ENCODE measurements at regions of chr6 and their contacts with region 1.

Region 1: DNA sequence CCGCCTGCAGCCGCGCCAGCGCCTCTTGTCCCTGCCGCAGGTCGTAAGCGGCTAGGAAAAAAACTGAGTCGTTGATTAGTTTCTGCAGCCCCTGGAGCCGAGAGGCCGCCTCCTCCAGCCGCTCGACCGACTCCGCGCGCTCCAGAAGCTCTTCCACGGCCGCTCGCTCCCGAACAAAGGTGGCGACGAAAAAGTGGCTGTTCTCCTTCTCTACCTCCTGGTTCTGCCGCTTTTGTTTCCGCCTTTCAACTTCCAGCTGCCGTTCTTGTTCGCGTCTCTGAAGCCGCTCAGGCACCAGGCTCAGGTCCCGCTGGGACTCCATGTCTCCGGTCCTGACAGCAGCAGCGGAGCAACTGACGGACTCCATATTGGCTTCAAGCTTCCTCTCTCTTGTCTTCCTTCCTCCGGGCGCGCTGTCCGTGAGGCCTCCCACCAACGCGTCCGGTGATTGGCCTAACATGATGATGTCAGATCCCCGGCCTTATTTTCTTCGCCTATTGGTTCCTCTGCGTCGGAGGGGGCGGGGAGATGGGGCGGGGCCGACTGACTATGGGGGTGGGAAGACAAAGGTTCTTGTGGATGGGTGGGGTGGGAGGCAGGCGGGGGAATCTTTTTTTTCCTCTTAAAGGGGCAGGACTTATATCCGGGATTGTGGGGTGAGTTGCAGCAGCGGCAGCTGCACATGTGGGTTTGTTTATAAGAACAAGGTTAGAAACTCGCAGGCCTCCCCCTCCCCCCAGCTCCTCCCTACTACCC is at the start of gene TBCC:
- DNase-seq: peak; percentile 94 to 99
- H3K4me3 ChIP-seq: peak within 1 kb of the TSS; percentile 83 to 90
- H3K27ac ChIP-seq: peak within 1 kb of the TSS; percentile 88 to 93
- H3K4me1 ChIP-seq: peaks cover 10 to 20% of the 10 kb centered on the region in 2 donors
- H3K27me3 ChIP-seq: no peaks in the 10 kb centered on the region
- CTCF ChIP-seq: no peak
- total RNA-seq, gene TBCC: 50.8 TPM

Region 2: GRCh38 chr6:42726485-42727086 is 19.3 kb before region 1 on chr6:
- intact Hi-C with region 1: loop called (anchors 1 kb)
- DNase-seq: peak; percentile 46 to 90
- H3K4me3 ChIP-seq: peak overlapping the region; percentile 53 to 70
- H3K27ac ChIP-seq: peak overlapping the region; percentile 51 to 58
- H3K4me1 ChIP-seq: peaks cover 0 to 5% of the 10 kb centered on the region in 2 donors
- H3K27me3 ChIP-seq: no peaks in the 10 kb centered on the region
- CTCF ChIP-seq: peak; percentile 80 to 89 (median 89)

Region 3: GRCh38 chr6:42790549-42791181 is 44.8 kb after region 1 on chr6:
- intact Hi-C with region 1: no loop called
- DNase-seq: no peak
- H3K4me3 ChIP-seq: peak overlapping the region in 1 of 2 donors; percentile 31
- H3K27ac ChIP-seq: peak overlapping the region; percentile 42 to 57
- H3K4me1 ChIP-seq: peaks cover 3 to 58% of the 10 kb centered on the region in 2 donors
- H3K27me3 ChIP-seq: no peaks in the 10 kb centered on the region
- CTCF ChIP-seq: no peak

Region 4: DNA sequence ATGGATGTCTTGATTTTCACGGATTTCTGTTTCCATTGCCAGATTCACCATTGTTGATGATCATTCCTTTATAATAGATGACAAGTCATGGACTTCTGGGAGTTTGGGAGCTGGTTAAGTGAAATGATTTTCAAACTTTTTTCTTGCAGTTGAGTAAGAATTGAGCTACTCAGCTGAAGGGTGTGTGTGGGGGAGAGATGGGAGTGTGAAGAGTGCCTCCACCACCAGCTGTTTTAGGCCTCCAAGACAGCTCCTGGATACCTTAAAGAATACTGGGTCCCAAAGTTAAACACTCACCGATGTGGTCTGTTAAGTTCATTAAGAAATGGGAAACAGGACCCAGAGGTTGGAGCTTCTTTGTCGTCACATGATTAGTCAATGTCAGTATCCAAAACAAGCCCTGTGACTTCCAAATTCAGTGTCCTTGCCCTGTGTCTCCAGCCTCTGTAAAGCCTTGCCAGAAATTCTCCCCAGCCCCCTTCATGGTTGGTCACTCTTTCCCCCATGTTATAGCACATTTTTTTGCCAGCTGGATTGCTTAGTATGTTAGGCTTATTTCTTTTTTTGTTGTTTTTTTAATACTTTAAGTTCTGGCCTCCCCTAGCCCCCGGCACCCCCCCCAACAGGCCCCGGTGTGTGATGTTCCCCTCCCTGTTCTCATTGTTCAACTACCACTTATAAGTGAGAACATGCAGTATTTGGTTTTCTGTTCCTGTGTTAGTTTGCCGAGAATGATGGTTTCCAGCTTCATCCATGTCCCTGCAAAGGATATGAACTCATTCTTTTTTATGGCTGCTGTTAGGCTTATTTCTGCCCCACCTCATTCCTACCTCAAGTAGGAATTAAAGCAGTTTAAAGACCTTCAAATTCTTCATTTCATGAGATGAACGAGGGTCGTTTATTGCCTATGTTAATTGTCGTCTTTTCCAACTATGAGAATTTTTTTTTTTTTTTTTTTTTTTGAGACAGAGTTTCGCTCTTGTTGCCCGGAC is 62.9 kb after region 1 on chr6:
- intact Hi-C with region 1: loop called (anchors 5 kb)
- DNase-seq: peak in 1 of 2 donors; percentile 3
- H3K4me3 ChIP-seq: no peak overlapping the region
- H3K27ac ChIP-seq: peak overlapping the region; percentile 49 to 58
- H3K4me1 ChIP-seq: peaks cover 0 to 4% of the 10 kb centered on the region in 2 donors
- H3K27me3 ChIP-seq: no peaks in the 10 kb centered on the region
- CTCF ChIP-seq: no peak

Region 5: DNA sequence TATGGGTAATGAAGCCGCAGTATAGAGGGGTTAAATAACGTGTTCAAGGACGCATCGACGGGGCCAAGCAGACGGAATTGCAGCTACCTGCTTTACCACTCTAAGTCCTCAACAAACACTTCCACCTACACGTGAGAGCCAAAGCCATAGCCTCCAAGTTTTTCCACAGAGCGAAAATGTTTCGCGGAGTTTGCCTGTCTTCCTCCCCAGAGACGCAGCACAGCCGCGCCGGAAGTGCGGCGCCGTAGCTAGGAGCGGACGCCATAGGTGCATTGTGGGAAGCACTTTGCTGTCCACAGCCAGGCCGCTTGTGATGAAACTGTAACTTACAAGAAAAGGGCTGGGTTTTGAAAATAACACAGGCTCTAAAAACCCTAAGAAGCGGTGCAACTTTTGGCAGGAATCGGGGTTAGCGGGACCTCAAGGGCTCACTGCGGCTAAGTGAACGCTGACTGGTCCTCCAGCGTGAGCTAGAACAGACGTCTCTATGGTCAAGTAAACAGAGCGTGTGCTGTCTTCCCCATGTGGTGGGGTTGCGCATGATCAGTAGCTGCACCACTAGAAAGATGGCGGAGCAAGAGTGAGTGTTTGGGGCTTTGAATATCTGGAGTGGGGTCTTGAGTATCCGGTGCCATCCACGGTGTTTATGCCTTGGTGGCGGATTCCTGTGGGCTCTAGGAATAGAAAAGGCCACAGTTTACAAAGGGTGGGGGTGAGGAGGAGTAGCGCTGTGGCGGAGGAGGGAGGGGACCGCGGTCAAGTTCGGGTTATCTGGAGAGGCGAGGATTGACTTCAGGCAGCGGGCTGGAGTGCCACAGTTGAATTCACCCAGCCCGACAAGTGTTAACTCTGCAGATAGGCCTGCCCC is 133.7 kb after region 1 on chr6 and contains the start of gene RPL7L1:
- intact Hi-C with region 1: loop called (anchors 1 kb)
- DNase-seq: peak; percentile 42 to 89
- H3K4me3 ChIP-seq: peak within 1 kb of the TSS; percentile 65 to 66
- H3K27ac ChIP-seq: peak within 1 kb of the TSS; percentile 85 to 95
- H3K4me1 ChIP-seq: peaks cover 5 to 18% of the 10 kb centered on the region in 2 donors
- H3K27me3 ChIP-seq: no peaks in the 10 kb centered on the region
- CTCF ChIP-seq: no peak
- total RNA-seq, gene RPL7L1: 34.8 TPM

Region 6: GRCh38 chr6:42933205-42933604 is 187.3 kb after region 1 on chr6:
- intact Hi-C with region 1: no loop called
- DNase-seq: no peak
- H3K4me3 ChIP-seq: no peak overlapping the region
- H3K27ac ChIP-seq: no peak overlapping the region
- H3K4me1 ChIP-seq: peaks cover 0 to 12% of the 10 kb centered on the region in 2 donors
- H3K27me3 ChIP-seq: no peaks in the 10 kb centered on the region
- CTCF ChIP-seq: no peak

Region 7: GRCh38 chr6:43516697-43517504 is 771.0 kb after region 1 on chr6 and contains the starts of genes POLR1C and YIPF3:
- intact Hi-C with region 1: loop called (anchors 10 kb)
- DNase-seq: peak; percentile 89 to 98
- H3K4me3 ChIP-seq: peak within 1 kb of the TSS; percentile 81 to 95
- H3K27ac ChIP-seq: peak within 1 kb of the TSS; percentile 82 to 87
- H3K4me1 ChIP-seq: peaks cover 11 to 24% of the 10 kb centered on the region in 2 donors
- H3K27me3 ChIP-seq: no peaks in the 10 kb centered on the region
- CTCF ChIP-seq: no peak
- total RNA-seq, gene POLR1C: 51.5 TPM
- total RNA-seq, gene YIPF3: 71.4 TPM

Measured in ascending aorta (tissue), 2 donors.